ENCODE measurements at regions of chr10 and their contacts with region 1.

Region 1: GRCh38 chr10:98748298-98748697 is 301.6 kb upstream of the HPS1 start:
- H3K4me3 Mint-ChIP-seq: no peak overlapping the region
- H3K27ac Mint-ChIP-seq: no peak overlapping the region
- H3K4me1 Mint-ChIP-seq: no peaks in the 10 kb centered on the region
- H3K27me3 Mint-ChIP-seq: no peaks in the 10 kb centered on the region

Region 2: DNA sequence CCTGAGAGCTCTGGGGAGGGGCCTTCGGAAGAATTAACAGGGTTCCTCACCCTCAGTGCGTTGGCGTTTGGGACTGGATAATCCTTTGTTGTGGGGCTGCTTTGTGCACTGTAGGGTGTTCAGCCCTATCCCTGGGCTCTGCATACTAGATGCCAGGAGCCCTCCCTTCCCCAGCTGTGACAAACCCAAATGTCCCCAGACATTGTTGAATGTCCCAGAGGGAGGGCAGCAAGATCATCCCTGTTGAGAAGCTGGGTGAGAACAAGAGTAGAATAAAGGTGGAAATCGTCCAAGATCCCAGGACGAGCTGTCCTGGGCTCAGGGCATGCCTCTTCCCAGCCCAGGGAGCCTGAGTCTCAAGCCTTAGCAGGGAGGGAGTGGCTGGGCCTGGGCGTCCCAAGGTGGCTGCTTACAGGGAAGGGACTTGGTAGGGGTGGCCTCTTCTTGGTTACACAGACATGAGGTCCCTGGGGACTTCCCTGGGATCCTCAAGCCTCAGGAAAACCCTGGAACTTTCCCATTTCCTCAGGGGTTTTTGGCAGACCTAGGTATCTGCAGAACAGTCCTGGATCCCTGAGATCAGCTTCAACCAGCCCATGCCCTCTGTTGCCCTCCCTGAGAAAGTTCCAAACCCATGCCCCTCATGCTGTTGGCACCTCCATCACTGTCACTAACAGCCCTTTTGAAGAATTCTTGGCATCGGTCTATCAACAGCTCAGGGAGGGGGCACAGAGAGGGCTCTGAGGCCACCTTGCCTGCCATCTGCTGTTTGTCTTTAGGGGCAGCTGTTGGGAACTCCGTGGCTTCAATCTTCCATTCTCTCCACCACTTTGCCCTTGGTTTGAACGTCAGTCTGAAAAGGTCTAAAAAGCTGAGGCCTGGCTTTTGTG is 844.9 kb before region 1 on chr10:
- intact Hi-C with region 1: no loop called
- H3K4me3 Mint-ChIP-seq: no peak overlapping the region
- H3K27ac Mint-ChIP-seq: no peak overlapping the region
- H3K4me1 Mint-ChIP-seq: no peaks in the 10 kb centered on the region
- H3K27me3 Mint-ChIP-seq: peaks cover 18% of the 10 kb centered on the region

Region 3: GRCh38 chr10:99248824-99249223 is 500.5 kb after region 1 on chr10:
- intact Hi-C with region 1: loop called (anchors 5 kb)
- H3K4me3 Mint-ChIP-seq: no peak overlapping the region
- H3K27ac Mint-ChIP-seq: no peak overlapping the region
- H3K4me1 Mint-ChIP-seq: no peaks in the 10 kb centered on the region
- H3K27me3 Mint-ChIP-seq: no peaks in the 10 kb centered on the region